OCI-LY7 (cell line): ENCODE measurements at regions of chr15 and their contacts with region 1.

Region 1: DNA sequence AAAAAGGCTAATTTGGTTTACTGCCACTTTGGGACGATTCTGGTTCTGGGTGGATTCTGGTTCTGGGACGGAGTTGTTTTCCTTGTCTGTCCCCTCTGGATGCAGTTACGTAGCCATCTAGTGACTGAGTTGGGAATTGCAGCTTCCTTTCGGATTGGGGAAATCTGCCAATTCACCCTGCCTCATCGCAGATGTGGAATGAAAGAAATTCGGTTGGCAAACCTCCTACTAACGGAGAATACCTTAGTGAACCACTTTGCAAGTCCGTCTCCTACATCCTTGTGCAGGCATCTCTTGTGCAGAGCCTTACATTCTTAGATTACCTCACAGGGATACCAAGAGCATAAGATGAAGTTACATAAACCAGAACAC is 31.5 kb upstream of the AP4E1 start:
- DNase-seq: peak; percentile 81
- H3K4me3 ChIP-seq: peak overlapping the region; percentile 48
- H3K27ac ChIP-seq: no peak overlapping the region
- H3K4me1 ChIP-seq: peaks cover 37% of the 10 kb centered on the region
- CTCF ChIP-seq: peak; percentile 99

Region 2: GRCh38 chr15:50675536-50676144 is 201.3 kb before region 1 on chr15:
- CTCF ChIA-PET with region 1: no interaction called
- POLR2A ChIA-PET with region 1: interaction called, 7 read pairs
- intact Hi-C with region 1: loop called (anchors 2 kb)
- DNase-seq: peak; percentile 25
- H3K4me3 ChIP-seq: no peak overlapping the region
- H3K27ac ChIP-seq: peak overlapping the region; percentile 24
- H3K4me1 ChIP-seq: peaks cover 6% of the 10 kb centered on the region
- CTCF ChIP-seq: peak; percentile 99

Region 3: GRCh38 chr15:50744601-50745000 is 132.4 kb before region 1 on chr15:
- CTCF ChIA-PET with region 1: no interaction called
- POLR2A ChIA-PET with region 1: no interaction called
- intact Hi-C with region 1: no loop called
- DNase-seq: no peak
- H3K4me3 ChIP-seq: no peak overlapping the region
- H3K27ac ChIP-seq: no peak overlapping the region
- H3K4me1 ChIP-seq: no peaks in the 10 kb centered on the region
- CTCF ChIP-seq: no peak

Region 4: GRCh38 chr15:50765195-50765973 is 111.6 kb before region 1 on chr15 and contains the start of gene SPPL2A:
- CTCF ChIA-PET with region 1: no interaction called
- POLR2A ChIA-PET with region 1: interaction called, 3 read pairs
- intact Hi-C with region 1: loop called (anchors 2 kb)
- DNase-seq: peak; percentile 83
- H3K4me3 ChIP-seq: peak within 1 kb of the TSS; percentile 86
- H3K27ac ChIP-seq: peak within 1 kb of the TSS; percentile 57
- H3K4me1 ChIP-seq: peaks cover 16% of the 10 kb centered on the region
- CTCF ChIP-seq: no peak
- total RNA-seq, gene SPPL2A: 15.0 and 24.6 TPM in 2 replicates

Region 5: DNA sequence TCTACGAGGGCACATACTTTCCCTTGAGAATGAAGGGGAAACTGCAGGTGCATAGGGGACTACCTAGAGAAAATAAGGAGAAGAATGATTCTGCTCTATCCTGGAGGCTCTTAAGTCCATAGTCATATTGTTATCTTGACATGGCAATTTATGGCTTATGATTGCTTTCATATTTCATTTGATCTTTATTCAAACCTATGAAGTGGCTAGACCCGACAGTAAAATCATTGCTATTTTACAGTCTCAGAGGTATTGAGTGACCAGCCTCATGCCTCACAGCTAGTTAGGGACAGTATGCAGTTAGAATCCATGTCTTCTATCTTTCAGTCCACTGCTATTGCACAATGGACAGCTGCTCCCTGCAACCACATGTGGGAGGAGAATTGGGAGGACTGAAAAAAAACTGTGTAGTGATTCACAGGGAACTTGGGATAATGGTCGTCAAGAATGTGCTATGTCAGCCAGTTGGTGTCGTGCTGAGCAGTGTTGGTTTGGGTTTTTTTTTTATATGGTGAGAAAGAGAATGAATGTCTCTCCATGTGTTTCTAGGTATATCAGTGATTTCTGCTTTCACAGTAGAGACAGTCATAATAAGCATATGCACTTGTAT is 48.3 kb before region 1 on chr15:
- CTCF ChIA-PET with region 1: no interaction called
- POLR2A ChIA-PET with region 1: no interaction called
- intact Hi-C with region 1: no loop called
- DNase-seq: no peak
- H3K4me3 ChIP-seq: no peak overlapping the region
- H3K27ac ChIP-seq: no peak overlapping the region
- H3K4me1 ChIP-seq: no peaks in the 10 kb centered on the region
- CTCF ChIP-seq: no peak

Region 6: DNA sequence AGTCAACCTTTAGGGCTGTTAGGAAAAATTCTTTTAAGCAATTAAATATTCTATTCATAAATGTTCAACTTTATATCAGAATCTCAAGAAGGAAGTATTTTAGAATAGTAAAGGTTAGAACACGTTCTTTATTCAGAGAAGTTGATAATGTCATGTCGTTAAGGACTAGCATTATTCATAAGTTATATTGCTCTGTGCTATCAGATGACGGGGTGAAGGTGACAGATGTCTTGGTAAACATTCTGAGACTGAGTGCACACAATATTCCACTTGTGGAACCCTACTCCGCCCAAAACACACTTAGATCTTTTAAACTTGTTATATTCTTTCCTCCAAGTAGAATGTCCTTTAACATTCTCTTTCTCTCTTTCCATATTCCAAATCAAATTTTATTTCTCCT is 39.4 kb after region 1 on chr15:
- CTCF ChIA-PET with region 1: no interaction called
- POLR2A ChIA-PET with region 1: no interaction called
- intact Hi-C with region 1: no loop called
- DNase-seq: no peak
- H3K4me3 ChIP-seq: no peak overlapping the region
- H3K27ac ChIP-seq: no peak overlapping the region
- H3K4me1 ChIP-seq: no peaks in the 10 kb centered on the region
- CTCF ChIP-seq: no peak

Region 7: DNA sequence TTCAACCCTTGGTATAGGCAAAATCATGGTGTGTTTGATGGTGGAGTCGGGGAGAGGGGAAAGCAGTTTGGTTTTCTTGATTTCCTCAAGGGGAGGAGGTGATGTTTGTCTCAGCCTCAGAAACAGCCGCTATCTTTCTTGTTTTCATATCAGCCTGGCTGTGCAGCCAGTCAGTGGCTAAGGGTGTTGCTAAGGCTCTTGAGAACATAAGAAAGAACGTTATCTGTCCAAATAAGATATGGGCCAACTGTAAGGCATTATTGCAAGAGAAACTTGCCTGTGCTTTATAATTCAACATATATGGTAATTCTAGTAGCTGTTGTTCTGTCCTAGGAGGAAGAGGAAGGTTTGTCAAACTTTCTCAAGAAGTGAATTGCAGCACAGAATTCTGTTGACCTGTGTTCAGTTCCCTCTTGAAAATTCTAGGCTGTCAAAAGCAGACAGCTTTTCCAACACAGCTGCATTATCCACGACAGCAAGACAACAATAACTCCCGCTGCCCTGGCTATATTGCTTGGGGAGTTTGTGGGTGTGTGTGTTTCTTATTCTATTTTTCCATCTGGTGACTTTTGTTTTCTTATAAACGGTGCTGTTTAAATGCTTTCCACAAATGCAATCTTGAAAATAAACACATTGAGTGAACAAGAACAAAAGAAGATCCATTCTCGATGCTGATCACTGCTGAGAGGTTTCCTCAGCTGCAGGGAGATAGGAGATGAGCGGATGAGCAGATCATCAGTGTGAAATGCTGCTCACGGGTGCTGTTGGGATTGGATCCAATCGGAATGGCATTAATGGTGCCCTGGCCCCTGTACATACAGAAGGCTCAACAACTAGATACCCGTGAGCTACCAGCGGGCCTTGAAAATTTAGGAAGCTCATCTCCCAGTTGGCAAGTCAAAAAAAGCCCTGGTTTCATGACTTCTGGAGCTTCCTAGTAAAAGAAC is 308.5 kb after region 1 on chr15:
- CTCF ChIA-PET with region 1: no interaction called
- POLR2A ChIA-PET with region 1: no interaction called
- intact Hi-C with region 1: no loop called
- DNase-seq: no peak
- H3K4me3 ChIP-seq: no peak overlapping the region
- H3K27ac ChIP-seq: no peak overlapping the region
- H3K4me1 ChIP-seq: no peaks in the 10 kb centered on the region
- CTCF ChIP-seq: no peak